Endothelial cell of umbilical vein (primary cell): ENCODE measurements at regions of chr7 and their contacts with region 1.

Region 1: DNA sequence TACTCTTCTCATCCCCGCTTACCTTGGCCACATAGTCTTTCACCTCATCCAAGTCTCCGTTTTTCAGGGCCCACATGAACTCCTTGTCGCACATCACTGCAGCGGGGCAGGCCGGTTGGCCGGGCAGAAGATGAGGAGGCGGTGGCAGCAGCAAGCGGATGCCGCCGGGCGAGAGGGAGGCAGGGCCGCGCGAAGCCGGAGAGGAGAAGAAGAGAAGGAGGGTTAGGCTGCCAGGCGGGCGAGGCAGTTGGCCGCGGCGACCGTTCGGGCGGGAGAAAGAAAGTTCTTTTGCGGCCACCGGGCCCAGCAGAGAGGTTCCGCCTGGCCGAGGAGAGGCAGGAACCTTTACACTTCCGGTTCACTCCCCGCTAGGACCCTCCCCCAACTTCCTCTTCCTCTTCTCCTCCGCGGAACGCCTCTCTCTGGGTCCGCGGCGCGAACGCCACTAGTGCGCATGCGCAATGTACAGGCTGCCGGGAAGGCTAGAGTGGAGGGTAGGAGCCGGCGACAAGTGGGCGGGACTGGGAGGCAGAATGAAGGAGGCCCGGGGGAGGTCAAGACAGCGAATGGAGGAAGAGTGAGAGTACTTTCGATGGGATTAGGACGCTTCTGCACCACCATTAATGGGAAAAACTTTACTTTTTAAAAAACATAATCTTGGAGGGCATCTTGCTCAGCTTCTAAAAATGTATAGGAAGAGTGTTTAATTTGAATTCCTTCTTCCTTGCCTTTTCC is at the start of gene MTPN:
- DNase-seq: peak; percentile 98
- H3K4me3 ChIP-seq: peak within 1 kb of the TSS; percentile 90 to 96 (median 91)
- H3K27ac ChIP-seq: peak within 1 kb of the TSS; percentile 81
- H3K4me1 ChIP-seq: peaks cover 53% of the 10 kb centered on the region
- H3K27me3 ChIP-seq: no peaks in the 10 kb centered on the region
- CTCF ChIP-seq: no peak
- POLR2A ChIP-seq: peak; percentile 71
- total RNA-seq, gene MTPN: 171 and 174 TPM in 2 replicates

Region 2: DNA sequence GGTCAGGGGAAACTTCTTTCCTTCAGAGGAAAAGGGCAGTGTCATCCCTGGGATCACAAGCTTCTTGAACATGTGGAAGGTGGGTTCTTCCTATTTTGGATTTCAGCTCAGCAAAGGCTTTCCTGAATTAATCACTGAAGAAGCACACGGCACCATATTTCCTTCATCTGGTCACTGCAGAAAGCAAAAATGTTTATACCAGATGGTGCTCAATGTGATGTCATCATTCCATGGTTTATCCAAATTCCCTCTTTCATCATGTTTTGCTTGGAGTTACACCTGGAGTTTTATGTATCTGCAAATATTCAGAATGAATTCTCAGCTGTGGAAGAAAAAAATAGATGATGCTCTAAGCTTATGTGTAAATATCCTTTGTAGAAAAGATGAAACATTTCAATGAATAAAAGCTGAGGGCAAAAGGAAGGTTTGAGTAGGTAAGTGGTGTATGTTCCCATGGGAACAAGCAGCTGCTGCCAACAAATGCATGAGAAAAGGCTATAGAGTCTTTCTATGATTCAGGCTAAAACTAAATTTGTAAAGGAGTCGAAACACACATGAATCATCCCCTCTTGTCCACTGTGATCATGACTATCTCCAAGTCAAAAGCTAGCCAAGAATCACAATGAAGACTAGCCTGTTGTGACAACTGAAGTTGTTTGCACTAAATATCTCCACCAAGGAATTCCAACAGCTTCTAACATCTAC is 1357.4 kb before region 1 on chr7:
- CTCF ChIA-PET with region 1: no interaction called
- POLR2A ChIA-PET with region 1: no interaction called
- dilution Hi-C with region 1: no loop called
- intact Hi-C with region 1: loop called (anchors 5 kb)
- DNase-seq: peak; percentile 83
- H3K4me3 ChIP-seq: no peak overlapping the region
- H3K27ac ChIP-seq: peak overlapping the region; percentile 23
- H3K4me1 ChIP-seq: peaks cover 26% of the 10 kb centered on the region
- H3K27me3 ChIP-seq: no peaks in the 10 kb centered on the region
- CTCF ChIP-seq: no peak
- POLR2A ChIP-seq: no peak

Region 3: DNA sequence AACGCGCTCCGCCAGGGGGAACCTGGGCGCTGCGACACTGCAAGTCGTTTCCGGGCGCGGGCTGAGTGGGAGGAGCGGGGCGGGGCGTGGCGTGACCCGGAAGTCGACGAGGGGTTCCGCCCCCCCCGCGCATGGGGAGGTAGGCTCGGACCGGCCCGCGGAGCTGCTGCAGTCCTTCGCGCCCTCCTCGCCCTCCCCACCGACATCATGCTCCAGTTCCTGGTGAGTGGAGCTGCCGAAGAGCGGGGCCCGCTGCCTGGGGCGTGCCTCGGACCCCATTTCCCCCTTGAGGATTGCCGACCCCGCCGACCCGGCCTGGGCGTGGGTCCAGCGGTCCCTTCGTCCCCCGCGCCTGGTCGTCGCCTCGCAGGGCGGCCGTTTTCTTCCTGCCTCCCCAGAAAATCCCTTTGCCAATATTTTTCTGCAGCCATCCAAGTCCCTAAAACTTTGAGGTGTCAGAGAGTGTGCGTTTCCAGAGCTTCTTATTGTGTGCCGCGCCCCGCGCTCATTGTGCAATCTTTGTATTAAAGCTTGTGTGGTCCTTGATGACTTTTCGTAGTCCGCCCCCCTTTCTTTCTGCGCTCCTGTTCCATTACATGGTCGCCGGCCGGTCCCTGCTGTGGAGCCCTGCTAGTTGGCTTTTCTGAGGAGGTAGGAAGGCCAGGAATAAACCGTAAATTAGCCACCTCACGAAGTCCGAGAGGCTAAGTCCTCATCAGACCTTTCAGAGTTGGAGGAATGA is 314.6 kb before region 1 on chr7 and contains the start of gene STMP1:
- CTCF ChIA-PET with region 1: no interaction called
- POLR2A ChIA-PET with region 1: no interaction called
- dilution Hi-C with region 1: no loop called
- intact Hi-C with region 1: loop called (anchors 2 kb)
- DNase-seq: peak; percentile 95
- H3K4me3 ChIP-seq: peak within 1 kb of the TSS; percentile 68 to 91 (median 86)
- H3K27ac ChIP-seq: peak within 1 kb of the TSS; percentile 91
- H3K4me1 ChIP-seq: peaks cover 36% of the 10 kb centered on the region
- H3K27me3 ChIP-seq: no peaks in the 10 kb centered on the region
- CTCF ChIP-seq: peak in 1 of 2 donors; percentile 77
- POLR2A ChIP-seq: peak; percentile 96
- total RNA-seq, gene STMP1: 21.4 and 31.3 TPM in 2 replicates

Region 4: DNA sequence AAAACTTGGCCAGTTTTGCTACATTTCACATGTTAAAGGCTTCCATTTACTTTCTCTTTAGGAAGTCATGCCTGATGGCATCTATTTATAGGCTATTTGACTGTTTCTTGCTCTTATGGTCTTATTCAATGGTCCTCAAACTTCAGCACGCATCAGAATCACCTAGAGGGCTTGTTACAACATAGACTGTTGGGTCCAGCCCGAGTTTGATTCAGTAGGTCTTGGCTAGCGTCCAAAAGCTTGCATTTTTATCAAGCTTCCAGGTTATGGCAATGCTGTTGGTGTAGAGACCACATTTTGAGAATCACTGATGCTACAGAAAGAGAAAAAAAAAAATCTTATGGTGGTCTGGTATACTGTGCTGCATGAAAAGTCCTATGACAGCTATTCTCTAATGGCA is 52.0 kb before region 1 on chr7:
- CTCF ChIA-PET with region 1: no interaction called
- POLR2A ChIA-PET with region 1: no interaction called
- dilution Hi-C with region 1: no loop called
- intact Hi-C with region 1: loop called (anchors 1 kb)
- DNase-seq: no peak
- H3K4me3 ChIP-seq: no peak overlapping the region
- H3K27ac ChIP-seq: peak overlapping the region; percentile 79
- H3K4me1 ChIP-seq: peaks cover 14% of the 10 kb centered on the region
- H3K27me3 ChIP-seq: no peaks in the 10 kb centered on the region
- CTCF ChIP-seq: no peak
- POLR2A ChIP-seq: no peak

Region 5: DNA sequence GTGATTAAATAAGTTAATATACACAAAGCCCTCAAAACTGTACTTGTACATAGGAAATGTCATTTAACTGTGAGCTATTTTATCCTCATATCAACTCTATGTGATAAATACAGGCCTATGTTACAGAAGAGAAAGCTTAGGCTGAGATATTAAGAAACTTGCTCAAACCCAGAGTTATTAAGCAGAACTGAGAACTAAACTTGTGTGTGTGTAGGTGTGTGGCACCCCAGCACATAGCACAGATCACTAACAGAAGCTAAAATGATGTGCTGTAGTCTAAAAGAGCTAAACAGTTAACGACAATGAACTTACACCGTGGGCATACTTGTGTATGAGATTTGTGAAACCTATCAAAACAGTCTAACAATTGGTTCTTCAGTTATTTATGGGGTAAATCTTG is 34.6 kb before region 1 on chr7:
- CTCF ChIA-PET with region 1: no interaction called
- POLR2A ChIA-PET with region 1: no interaction called
- dilution Hi-C with region 1: no loop called
- intact Hi-C with region 1: loop called (anchors 1 kb)
- DNase-seq: no peak
- H3K4me3 ChIP-seq: no peak overlapping the region
- H3K27ac ChIP-seq: peak overlapping the region; percentile 65
- H3K4me1 ChIP-seq: peaks cover 14% of the 10 kb centered on the region
- H3K27me3 ChIP-seq: no peaks in the 10 kb centered on the region
- CTCF ChIP-seq: no peak
- POLR2A ChIP-seq: no peak

Region 6: DNA sequence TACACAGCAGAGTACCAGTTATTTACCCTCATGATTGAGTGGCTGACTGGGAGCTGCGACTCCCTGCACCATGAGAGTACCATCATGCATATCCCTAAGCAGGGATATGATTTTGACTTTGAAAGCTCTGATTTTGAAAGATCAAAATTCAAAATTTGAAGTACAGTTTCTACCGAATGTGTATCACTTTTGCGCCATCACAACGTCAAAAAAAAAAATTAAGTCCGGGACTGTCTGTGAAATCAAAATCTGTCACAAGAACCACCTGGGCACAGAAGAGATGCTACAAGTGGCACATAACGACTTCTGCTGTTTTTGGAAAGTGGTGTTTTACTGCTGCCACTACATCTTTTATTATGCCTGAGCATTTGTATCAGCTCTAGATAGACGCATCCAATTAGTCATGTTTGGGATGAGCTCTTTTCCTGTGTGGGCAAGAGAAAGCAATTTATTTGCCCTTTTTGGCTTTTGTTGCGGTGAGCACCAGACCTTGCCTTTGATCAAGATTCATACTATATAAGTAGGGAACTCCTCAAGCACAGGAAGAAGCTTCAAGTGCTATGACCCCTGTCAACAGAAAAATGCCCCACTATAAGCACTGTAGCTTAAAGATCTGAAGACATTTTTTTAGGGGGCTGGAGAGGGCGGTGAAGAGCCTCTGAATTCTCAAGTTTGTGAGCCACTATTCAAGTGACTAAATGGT is 10.7 kb before region 1 on chr7:
- CTCF ChIA-PET with region 1: no interaction called
- POLR2A ChIA-PET with region 1: no interaction called
- dilution Hi-C with region 1: no loop called
- intact Hi-C with region 1: loop called (anchors 1 kb)
- DNase-seq: no peak
- H3K4me3 ChIP-seq: no peak overlapping the region
- H3K27ac ChIP-seq: no peak overlapping the region
- H3K4me1 ChIP-seq: no peaks in the 10 kb centered on the region
- H3K27me3 ChIP-seq: no peaks in the 10 kb centered on the region
- CTCF ChIP-seq: no peak
- POLR2A ChIP-seq: no peak

Region 7: GRCh38 chr7:136009488-136010079 is 32.4 kb after region 1 on chr7:
- CTCF ChIA-PET with region 1: interaction called, 4 read pairs
- POLR2A ChIA-PET with region 1: no interaction called
- dilution Hi-C with region 1: no loop called
- intact Hi-C with region 1: loop called (anchors 1 kb)
- DNase-seq: peak; percentile 62
- H3K4me3 ChIP-seq: no peak overlapping the region
- H3K27ac ChIP-seq: no peak overlapping the region
- H3K4me1 ChIP-seq: no peaks in the 10 kb centered on the region
- H3K27me3 ChIP-seq: peaks cover 0 to 5% of the 10 kb centered on the region in 2 experiments
- CTCF ChIP-seq: peak; percentile 29 to 40
- POLR2A ChIP-seq: no peak

Region 8: DNA sequence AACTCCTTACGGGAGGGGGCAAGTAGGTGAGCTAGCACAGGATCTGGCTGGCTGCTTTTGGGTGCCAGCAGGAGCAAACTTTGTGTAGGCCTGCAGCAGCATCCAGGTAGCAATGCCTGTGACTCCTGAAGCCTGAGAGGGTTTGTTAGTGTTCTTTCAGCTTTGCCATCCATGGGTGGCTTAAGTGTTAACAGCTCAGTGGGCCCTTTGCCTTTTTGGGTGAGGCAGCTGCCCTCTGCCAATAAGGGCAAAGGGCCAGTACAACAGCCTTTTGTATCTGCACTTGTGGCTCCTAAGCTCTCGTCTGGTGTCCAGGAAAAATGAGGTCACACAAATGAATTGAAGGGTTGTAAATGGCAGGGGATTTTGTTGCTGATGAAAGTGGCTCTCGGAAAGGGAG is 532.3 kb after region 1 on chr7:
- CTCF ChIA-PET with region 1: no interaction called
- POLR2A ChIA-PET with region 1: no interaction called
- dilution Hi-C with region 1: no loop called
- intact Hi-C with region 1: no loop called
- DNase-seq: no peak
- H3K4me3 ChIP-seq: no peak overlapping the region
- H3K27ac ChIP-seq: no peak overlapping the region
- H3K4me1 ChIP-seq: no peaks in the 10 kb centered on the region
- H3K27me3 ChIP-seq: no peaks in the 10 kb centered on the region
- CTCF ChIP-seq: no peak
- POLR2A ChIP-seq: no peak